Activated CD4-positive, alpha-beta memory T cell treated with anti-CD3 and anti-CD28 coated beads for 36 hours (primary cell): ENCODE measurements at regions of chr15 and their contacts with region 1.

Region 1: GRCh38 chr15:94324117-94324826 is 92.9 kb downstream of the MCTP2 start:
- DNase-seq: peak; percentile 73
- H3K4me3 Mint-ChIP-seq: no peak overlapping the region
- H3K27ac Mint-ChIP-seq: no peak overlapping the region
- H3K4me1 Mint-ChIP-seq: peaks cover 12% of the 10 kb centered on the region
- H3K27me3 Mint-ChIP-seq: no peaks in the 10 kb centered on the region

Region 2: GRCh38 chr15:94174399-94174802 is 149.9 kb before region 1 on chr15:
- CTCF ChIA-PET with region 1: interaction called, 17 read pairs
- POLR2A ChIA-PET with region 1: no interaction called
- intact Hi-C with region 1: no loop called
- DNase-seq: peak; percentile 38
- H3K4me3 Mint-ChIP-seq: no peak overlapping the region
- H3K27ac Mint-ChIP-seq: no peak overlapping the region
- H3K4me1 Mint-ChIP-seq: peaks cover 10% of the 10 kb centered on the region
- H3K27me3 Mint-ChIP-seq: peaks cover 9% of the 10 kb centered on the region

Region 3: GRCh38 chr15:94206463-94207167 is 117.7 kb before region 1 on chr15:
- CTCF ChIA-PET with region 1: interaction called, 5 read pairs
- POLR2A ChIA-PET with region 1: no interaction called
- intact Hi-C with region 1: loop called (anchors 1 kb)
- DNase-seq: peak; percentile 71
- H3K4me3 Mint-ChIP-seq: no peak overlapping the region
- H3K27ac Mint-ChIP-seq: peak overlapping the region; percentile 78
- H3K4me1 Mint-ChIP-seq: peaks cover 18% of the 10 kb centered on the region
- H3K27me3 Mint-ChIP-seq: peaks cover 18% of the 10 kb centered on the region

Region 4: GRCh38 chr15:94335616-94336015 is 11.3 kb after region 1 on chr15:
- CTCF ChIA-PET with region 1: interaction called, 37 read pairs
- POLR2A ChIA-PET with region 1: no interaction called
- intact Hi-C with region 1: no loop called
- DNase-seq: no peak
- H3K4me3 Mint-ChIP-seq: no peak overlapping the region
- H3K27ac Mint-ChIP-seq: no peak overlapping the region
- H3K4me1 Mint-ChIP-seq: no peaks in the 10 kb centered on the region
- H3K27me3 Mint-ChIP-seq: no peaks in the 10 kb centered on the region